GM10248 (cell line): ENCODE measurements at regions of chr18 and their contacts with region 1.

Region 1: DNA sequence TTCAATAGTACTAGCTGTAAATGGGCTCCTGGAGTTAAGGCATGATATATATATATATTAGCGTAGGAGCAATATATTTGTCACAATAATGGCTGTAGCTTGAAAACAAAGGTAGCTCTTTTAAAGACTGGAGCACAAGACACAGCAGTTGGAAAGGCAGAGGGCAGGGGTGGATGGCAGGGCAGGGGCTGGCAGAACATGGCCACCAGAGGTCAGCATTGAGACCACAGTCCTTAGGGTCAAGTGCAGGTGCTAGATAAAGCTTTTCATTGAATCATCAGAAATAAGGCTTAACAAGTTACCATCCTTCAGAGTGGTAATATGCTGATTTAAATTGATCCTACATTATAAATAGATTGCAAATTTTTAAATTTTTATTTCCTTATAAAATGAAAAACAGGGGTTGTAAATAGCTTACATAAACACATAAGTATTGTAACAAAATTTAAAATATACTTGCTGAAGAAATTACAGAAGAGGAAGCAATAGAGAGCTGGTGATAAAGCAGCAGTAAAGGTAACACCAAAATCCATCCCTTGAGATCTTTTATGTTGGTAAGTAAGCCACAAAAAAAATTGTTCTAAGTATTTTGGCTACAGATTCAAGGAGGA is 161.2 kb upstream of the PIEZO2 start:
- DNase-seq: peak; percentile 46
- CTCF ChIP-seq: peak; percentile 75

Region 2: GRCh38 chr18:11052800-11053199 is 257.8 kb before region 1 on chr18:
- CTCF ChIA-PET with region 1: no interaction called
- POLR2A ChIA-PET with region 1: no interaction called
- DNase-seq: no peak
- CTCF ChIP-seq: no peak

Region 3: GRCh38 chr18:11119962-11120361 is 190.6 kb before region 1 on chr18:
- CTCF ChIA-PET with region 1: no interaction called
- POLR2A ChIA-PET with region 1: no interaction called
- DNase-seq: no peak
- CTCF ChIP-seq: no peak

Region 4: GRCh38 chr18:11293794-11294193 is 16.8 kb before region 1 on chr18:
- CTCF ChIA-PET with region 1: interaction called, 12 read pairs
- POLR2A ChIA-PET with region 1: no interaction called
- DNase-seq: peak; percentile 15
- CTCF ChIP-seq: no peak

Region 5: GRCh38 chr18:11324956-11325873 is 14.6 kb after region 1 on chr18:
- CTCF ChIA-PET with region 1: interaction called, 13 read pairs
- POLR2A ChIA-PET with region 1: no interaction called
- DNase-seq: peak; percentile 59
- CTCF ChIP-seq: no peak

Region 6: DNA sequence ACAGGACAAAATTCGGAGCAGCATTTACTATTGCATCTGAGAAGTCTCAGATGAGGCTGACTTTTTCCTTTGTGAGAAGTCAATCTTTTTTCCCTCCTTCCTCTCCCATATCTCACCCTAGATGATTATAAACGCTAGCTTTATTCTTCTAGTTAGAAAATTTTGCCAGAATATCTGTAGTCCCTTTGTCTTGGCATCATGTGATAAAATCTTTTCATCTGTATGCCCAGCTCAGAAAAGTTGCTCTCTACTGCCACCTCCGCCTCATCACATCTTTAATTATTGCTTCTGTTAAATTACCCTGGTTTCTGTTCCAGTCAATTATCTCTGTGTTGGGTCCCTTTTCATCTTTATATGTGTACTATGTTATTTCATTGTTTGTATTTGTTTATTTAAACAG is 88.0 kb after region 1 on chr18:
- CTCF ChIA-PET with region 1: no interaction called
- POLR2A ChIA-PET with region 1: no interaction called
- DNase-seq: no peak
- CTCF ChIP-seq: no peak

Region 7: GRCh38 chr18:12159447-12159846 is 848.9 kb after region 1 on chr18:
- CTCF ChIA-PET with region 1: no interaction called
- POLR2A ChIA-PET with region 1: no interaction called
- DNase-seq: no peak
- CTCF ChIP-seq: no peak